Mucosa of descending colon (tissue), 3 donors: ENCODE measurements at regions of chr13 and their contacts with region 1.

Region 1: DNA sequence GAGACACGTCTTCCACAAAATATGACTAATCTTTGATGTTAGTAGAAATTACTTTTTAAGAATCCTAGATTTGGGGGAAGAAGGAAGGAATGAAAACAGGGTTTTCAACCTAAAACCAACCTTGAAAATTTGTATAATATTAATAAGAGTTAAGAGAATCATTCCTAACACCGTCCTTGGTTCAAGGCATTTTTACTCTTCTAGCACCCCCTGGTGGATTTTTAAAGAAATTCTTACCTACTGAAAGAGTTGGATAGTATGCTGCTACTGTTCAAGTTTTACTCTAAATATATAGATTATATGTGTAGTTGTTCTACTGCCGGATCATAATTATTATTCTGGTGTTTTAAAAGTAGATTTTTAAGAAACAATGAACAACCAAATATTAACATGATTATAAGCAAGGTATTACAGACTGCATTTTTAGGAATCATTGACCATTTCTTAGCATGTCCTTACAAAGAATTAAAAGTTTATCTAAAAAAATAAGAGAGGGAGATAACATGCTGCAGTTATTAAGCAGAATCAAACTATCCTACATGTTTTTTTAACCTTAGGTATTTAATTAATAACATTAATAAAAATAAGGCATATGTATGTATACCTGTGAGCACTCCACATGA is 7.4 kb upstream of the SLITRK6 start:
- DNase-seq: no peak
- ATAC-seq: no peak
- H3K4me3 ChIP-seq: no peak overlapping the region
- H3K4me1 ChIP-seq: no peaks in the 10 kb centered on the region
- CTCF ChIP-seq: peak; percentile 22

Region 2: DNA sequence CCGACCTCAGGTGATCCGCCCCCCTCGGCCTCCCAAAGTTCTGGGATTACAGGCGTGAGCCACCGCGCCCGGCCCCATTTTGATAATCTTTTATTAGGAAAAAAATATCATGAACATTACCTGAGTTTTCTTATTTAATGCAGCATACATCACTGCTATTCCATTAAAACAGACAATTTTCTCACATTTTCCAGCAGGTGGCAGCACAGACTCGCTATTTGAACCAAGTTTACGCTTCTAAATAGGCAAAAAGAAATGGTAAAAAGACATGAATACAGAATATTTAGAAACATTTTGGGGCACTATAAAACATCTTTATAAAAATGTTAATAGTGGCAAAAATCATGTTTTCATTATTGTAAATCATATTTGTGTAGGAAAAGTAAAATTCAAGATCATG is 910.5 kb before region 1 on chr13:
- intact Hi-C with region 1: loop called in 1 of 2 experiments (anchors 5 kb)
- DNase-seq: peak in 1 of 3 donors; percentile 17
- ATAC-seq: no peak
- H3K4me3 ChIP-seq: no peak overlapping the region
- H3K4me1 ChIP-seq: no peaks in the 10 kb centered on the region
- CTCF ChIP-seq: peak; percentile 25

Region 3: GRCh38 chr13:84917252-84917878 is 889.3 kb before region 1 on chr13:
- intact Hi-C with region 1: loop called in 1 of 2 experiments (anchors 5 kb)
- DNase-seq: no peak
- ATAC-seq: no peak
- H3K4me3 ChIP-seq: no peak overlapping the region
- H3K4me1 ChIP-seq: no peaks in the 10 kb centered on the region
- CTCF ChIP-seq: no peak

Region 4: DNA sequence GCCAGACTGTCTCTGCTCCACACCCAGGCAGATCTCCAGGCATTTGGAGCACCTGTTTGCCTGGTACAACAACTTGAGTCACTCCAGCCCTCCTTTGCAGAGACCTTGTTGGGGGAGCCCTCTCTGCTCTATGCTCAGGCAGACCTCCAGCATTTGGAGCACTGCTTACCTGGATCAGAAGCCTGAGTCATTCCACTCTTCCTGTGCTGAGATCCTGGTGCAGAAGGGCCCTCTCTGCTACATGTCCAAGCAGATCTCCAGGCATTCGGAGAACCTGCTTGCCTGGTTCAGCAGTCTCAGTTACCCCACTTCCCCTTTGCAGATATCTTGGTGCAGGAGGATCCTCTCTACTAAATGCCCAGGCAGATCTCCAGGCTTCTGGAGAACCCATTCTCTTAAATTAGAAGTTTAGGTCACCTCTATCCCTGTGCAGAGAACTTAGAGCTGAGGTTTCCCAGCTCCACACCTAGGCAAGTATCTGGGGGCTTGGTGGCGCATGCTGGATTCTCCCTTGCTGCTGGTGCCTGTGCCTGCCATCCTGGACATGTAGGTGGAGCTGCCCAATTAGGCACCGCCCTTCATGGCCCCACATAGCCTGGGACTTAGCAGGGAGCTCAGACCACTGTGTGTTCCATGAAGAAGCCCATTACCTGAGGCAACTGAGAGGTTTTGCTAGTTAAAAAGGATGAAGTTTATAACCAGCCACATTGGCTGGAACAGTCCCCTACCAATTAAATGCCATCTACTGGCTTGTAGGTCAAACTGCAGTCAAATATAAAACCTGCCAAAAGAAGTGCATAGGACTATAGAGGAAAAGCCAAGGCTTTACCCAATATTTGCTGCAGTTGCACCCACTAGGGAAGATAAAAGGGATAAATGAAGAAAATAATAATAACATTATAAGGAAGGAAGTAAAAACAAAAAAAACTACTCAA is 90.1 kb after region 1 on chr13:
- intact Hi-C with region 1: no loop called
- DNase-seq: no peak
- ATAC-seq: no peak
- H3K4me3 ChIP-seq: no peak overlapping the region
- H3K4me1 ChIP-seq: no peaks in the 10 kb centered on the region
- CTCF ChIP-seq: no peak